CD14-positive monocyte (primary cell): ENCODE measurements at regions of chr14 and their contacts with region 1.

Region 1: DNA sequence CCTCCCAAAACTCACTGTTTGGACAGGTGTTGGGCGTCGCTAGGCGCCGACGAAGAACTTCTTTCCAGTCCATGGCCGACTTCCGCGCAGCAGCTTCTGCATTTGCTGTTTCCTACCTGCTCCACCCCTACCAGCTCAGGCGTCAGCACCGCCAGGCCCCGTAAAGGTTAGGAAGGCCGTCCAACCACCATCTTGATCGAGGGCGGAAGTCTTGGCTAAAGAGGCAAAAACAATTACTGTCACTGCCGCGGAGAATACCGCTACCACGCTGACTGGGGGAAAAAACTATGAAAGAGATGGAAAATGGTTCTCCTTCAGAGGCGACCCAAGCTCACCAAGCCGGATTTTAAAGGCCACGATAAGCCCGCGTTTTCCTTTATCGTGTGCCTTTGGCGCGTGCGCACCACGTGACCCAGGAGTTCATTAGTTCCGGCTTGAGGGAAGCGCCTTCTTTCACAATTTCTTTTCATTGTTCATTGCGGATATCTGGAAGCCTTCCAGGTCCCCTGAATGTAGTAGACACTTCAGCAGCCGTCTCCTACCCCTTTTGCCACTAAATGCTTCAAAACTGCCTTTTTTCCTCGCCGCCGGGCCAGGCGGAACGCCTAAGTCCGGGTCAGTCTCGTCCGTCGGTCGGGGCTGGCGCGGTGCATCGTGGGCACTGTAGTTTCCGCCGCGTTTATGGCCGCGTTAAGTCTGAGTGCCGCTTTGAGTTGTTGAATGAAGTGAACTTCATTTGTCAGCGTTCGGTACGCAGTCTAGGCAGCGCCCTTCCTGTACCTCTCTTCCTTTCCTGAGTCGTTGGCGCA is at the starts of genes PPP2R3C and PRORP:
- DNase-seq: peak; percentile 87 to 92 (median 87)
- H3K4me3 ChIP-seq: peak within 1 kb of the TSS; percentile 75 to 97 (median 96)
- H3K4me3 Mint-ChIP-seq: peak within 1 kb of the TSS; percentile 94 to 99
- H3K27ac ChIP-seq: peak within 1 kb of the TSS; percentile 86 to 99
- H3K27ac Mint-ChIP-seq: peak within 1 kb of the TSS; percentile 98 to 100 (median 100)
- H3K4me1 ChIP-seq: peaks cover 23 to 26% of the 10 kb centered on the region in 2 donors
- H3K4me1 Mint-ChIP-seq: peaks cover 56% of the 10 kb centered on the region
- H3K27me3 ChIP-seq: no peaks in the 10 kb centered on the region
- H3K27me3 Mint-ChIP-seq: peaks cover 0 to 2% (median 2%) of the 10 kb centered on the region in 3 donors
- CTCF ChIP-seq: no peak
- polyA plus RNA-seq, gene PPP2R3C: 21.4 to 131 (median 122) TPM
- polyA plus RNA-seq, gene PRORP: 10.7 to 22.2 (median 17.9) TPM

Region 2: DNA sequence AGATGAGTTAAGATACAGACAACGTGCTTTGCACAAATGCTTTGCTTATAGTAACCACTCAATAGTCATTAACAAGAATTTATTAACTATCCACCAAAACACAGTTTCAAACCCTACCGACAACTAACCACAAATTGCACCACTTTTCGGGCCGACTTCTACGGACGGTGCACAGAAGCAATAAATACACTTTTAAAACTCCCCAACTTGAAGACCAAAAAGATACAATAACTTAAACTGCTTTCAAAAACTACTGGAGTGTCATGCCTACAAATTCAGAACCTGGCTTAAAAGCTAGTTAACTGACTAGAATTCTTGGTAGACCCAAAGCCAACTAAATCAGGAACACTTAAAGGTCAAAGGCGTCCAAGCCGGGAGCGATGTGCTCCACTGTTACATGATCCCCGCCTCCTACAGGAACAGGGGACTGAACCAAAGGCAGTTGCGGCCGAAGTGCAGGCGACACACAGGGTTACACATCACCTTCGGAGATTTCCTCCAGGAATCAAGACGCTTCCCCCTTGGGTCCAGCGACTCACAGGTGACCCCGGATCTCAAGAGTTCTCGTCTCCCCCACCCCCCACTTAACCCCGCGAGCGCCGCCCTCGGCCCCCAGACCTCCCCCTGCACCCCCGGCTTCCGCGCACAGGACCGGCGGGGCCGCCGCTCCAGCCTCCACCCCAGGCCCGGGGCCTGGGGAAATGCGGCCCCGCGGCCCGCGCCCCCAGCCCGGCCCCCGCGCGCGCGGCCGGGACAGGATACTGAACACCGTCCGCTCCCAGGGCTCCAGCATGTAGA is 660.6 kb before region 1 on chr14:
- intact Hi-C with region 1: loop called in 1 of 2 experiments (anchors 10 kb)
- DNase-seq: peak; percentile 3 to 32 (median 28)
- H3K4me3 ChIP-seq: peak overlapping the region; percentile 80 to 97 (median 84)
- H3K4me3 Mint-ChIP-seq: peak overlapping the region; percentile 91 to 93
- H3K27ac ChIP-seq: peak overlapping the region; percentile 58 to 85
- H3K27ac Mint-ChIP-seq: peak overlapping the region; percentile 86 to 96 (median 93)
- H3K4me1 ChIP-seq: peaks cover 37% of the 10 kb centered on the region in 2 donors
- H3K4me1 Mint-ChIP-seq: peaks cover 23% of the 10 kb centered on the region
- H3K27me3 ChIP-seq: no peaks in the 10 kb centered on the region
- H3K27me3 Mint-ChIP-seq: peaks cover 0 to 1% (median 0%) of the 10 kb centered on the region in 3 donors
- CTCF ChIP-seq: no peak

Region 3: DNA sequence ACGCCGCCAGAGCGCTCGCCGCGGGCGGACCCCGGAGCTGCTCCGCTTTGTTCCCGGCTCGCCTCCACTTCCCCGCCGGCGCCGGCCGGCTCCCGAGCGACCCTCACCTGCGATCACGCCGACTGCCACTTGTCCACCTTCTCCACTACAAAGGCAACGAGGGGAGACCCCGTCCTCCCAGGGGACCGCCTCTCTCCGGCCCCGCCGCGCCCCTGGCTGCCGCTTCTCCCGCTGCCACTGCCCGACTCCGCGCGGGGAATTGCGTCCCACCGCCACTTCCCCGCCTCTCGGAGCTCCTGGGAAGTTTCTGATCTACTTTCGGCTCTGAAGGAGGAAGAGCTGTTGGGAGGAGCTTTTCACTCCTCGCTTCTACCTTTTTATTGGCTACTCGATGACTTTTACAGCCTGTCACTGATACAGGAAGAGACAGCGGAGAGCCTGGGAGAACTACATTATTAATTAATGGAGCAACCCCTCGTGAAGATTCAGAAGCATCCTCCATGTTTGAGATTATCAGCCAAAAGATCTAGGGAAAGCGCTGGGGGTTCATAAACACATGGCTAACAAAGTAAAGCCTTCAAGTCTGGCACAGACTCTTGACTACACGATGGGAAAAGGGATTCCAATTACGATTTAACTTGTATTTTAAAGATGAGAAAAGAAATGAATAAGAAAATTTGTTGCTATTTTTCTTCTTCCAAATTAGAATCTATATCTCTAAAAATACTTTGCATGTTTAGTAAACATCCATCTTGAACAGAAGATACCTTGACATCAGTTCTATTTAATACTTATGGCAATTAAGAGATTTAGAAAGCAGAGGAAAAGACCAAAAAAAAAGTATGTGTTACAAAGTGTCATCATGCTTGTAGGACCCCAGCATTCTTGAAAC is 246.8 kb before region 1 on chr14 and contains the start of gene BAZ1A:
- intact Hi-C with region 1: loop called in 1 of 2 experiments (anchors 5 kb)
- DNase-seq: peak; percentile 66 to 86 (median 85)
- H3K4me3 ChIP-seq: peak within 1 kb of the TSS; percentile 71 to 99 (median 82)
- H3K4me3 Mint-ChIP-seq: peak within 1 kb of the TSS; percentile 100
- H3K27ac ChIP-seq: peak within 1 kb of the TSS; percentile 94 to 99
- H3K27ac Mint-ChIP-seq: peak within 1 kb of the TSS; percentile 99 to 100 (median 99)
- H3K4me1 ChIP-seq: peaks cover 14 to 18% of the 10 kb centered on the region in 2 donors
- H3K4me1 Mint-ChIP-seq: peaks cover 29% of the 10 kb centered on the region
- H3K27me3 ChIP-seq: no peaks in the 10 kb centered on the region
- H3K27me3 Mint-ChIP-seq: no peaks in the 10 kb centered on the region
- CTCF ChIP-seq: no peak
- polyA plus RNA-seq, gene BAZ1A: 7.3 to 25.5 (median 12.7) TPM

Region 4: DNA sequence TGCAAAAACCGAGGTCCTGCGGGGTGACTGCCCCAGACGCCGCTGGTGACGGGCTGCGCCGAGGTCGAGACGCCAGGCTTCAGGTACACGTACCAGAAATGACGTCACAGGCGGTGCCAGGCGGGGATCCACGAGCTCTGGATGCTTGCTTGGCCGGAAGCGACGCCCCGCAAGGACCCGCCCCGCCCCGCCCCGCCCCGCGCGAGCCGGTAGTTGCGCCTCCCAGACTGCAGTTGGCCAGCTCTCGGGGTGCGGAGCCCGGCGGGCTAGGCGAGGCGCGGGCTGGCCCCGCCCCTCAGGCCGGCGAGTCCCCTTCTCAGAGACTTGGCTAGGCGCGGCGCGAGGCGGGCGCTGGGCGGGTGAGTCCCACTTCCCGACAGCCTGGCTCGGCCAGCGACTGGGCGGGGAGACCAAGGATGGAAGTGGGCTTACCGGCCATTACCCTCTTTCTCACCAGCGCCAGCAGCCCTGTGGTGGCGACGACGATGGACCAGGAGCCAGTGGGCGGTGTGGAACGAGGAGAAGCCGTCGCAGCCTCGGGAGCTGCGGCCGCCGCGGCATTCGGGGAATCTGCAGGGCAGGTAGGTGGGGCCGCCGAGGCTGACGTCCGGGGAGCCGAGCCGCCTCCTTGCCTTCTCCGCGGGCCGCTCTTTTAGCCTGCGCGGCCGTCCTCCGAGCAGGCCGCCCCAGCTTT is 75.9 kb before region 1 on chr14 and contains the start of gene FAM177A1:
- intact Hi-C with region 1: loop called (anchors 2 to 5 kb)
- DNase-seq: peak; percentile 98 to 99 (median 98)
- H3K4me3 ChIP-seq: peak within 1 kb of the TSS; percentile 72 to 94 (median 86)
- H3K4me3 Mint-ChIP-seq: peak within 1 kb of the TSS; percentile 96 to 98
- H3K27ac ChIP-seq: peak within 1 kb of the TSS; percentile 89 to 95
- H3K27ac Mint-ChIP-seq: peak within 1 kb of the TSS; percentile 98 to 100 (median 99)
- H3K4me1 ChIP-seq: peaks cover 15 to 24% of the 10 kb centered on the region in 2 donors
- H3K4me1 Mint-ChIP-seq: peaks cover 26% of the 10 kb centered on the region
- H3K27me3 ChIP-seq: no peaks in the 10 kb centered on the region
- H3K27me3 Mint-ChIP-seq: peaks cover 0 to 3% (median 0%) of the 10 kb centered on the region in 3 donors
- CTCF ChIP-seq: no peak
- polyA plus RNA-seq, gene FAM177A1: 12.5 to 48.1 (median 29.4) TPM

Region 5: GRCh38 chr14:35134328-35135123 is 12.4 kb after region 1 on chr14:
- intact Hi-C with region 1: no loop called
- DNase-seq: no peak
- H3K4me3 ChIP-seq: no peak overlapping the region
- H3K4me3 Mint-ChIP-seq: no peak overlapping the region
- H3K27ac ChIP-seq: peak overlapping the region in 1 of 2 donors; percentile 58
- H3K27ac Mint-ChIP-seq: peak overlapping the region in 5 of 7 donors; percentile 12 to 70 (median 59)
- H3K4me1 ChIP-seq: peaks cover 7 to 39% of the 10 kb centered on the region in 2 donors
- H3K4me1 Mint-ChIP-seq: peaks cover 40% of the 10 kb centered on the region
- H3K27me3 ChIP-seq: no peaks in the 10 kb centered on the region
- H3K27me3 Mint-ChIP-seq: no peaks in the 10 kb centered on the region
- CTCF ChIP-seq: no peak

Region 6: GRCh38 chr14:35404449-35405303 is 282.6 kb after region 1 on chr14 and contains the start of gene NFKBIA:
- intact Hi-C with region 1: loop called (anchors 2 to 5 kb)
- DNase-seq: peak; percentile 97 to 99 (median 98)
- H3K4me3 ChIP-seq: peak within 1 kb of the TSS; percentile 84 to 99 (median 88)
- H3K4me3 Mint-ChIP-seq: peak within 1 kb of the TSS; percentile 95 to 99
- H3K27ac ChIP-seq: peak within 1 kb of the TSS; percentile 99
- H3K27ac Mint-ChIP-seq: peak within 1 kb of the TSS; percentile 98 to 100 (median 99)
- H3K4me1 ChIP-seq: peaks cover 52 to 56% of the 10 kb centered on the region in 2 donors
- H3K4me1 Mint-ChIP-seq: peaks cover 54% of the 10 kb centered on the region
- H3K27me3 ChIP-seq: no peaks in the 10 kb centered on the region
- H3K27me3 Mint-ChIP-seq: peaks cover 1 to 9% (median 6%) of the 10 kb centered on the region in 3 donors
- CTCF ChIP-seq: no peak
- polyA plus RNA-seq, gene NFKBIA: 868 to 4,739 (median 935) TPM